ENCODE measurements at regions of chr13 and their contacts with region 1.

Region 1: DNA sequence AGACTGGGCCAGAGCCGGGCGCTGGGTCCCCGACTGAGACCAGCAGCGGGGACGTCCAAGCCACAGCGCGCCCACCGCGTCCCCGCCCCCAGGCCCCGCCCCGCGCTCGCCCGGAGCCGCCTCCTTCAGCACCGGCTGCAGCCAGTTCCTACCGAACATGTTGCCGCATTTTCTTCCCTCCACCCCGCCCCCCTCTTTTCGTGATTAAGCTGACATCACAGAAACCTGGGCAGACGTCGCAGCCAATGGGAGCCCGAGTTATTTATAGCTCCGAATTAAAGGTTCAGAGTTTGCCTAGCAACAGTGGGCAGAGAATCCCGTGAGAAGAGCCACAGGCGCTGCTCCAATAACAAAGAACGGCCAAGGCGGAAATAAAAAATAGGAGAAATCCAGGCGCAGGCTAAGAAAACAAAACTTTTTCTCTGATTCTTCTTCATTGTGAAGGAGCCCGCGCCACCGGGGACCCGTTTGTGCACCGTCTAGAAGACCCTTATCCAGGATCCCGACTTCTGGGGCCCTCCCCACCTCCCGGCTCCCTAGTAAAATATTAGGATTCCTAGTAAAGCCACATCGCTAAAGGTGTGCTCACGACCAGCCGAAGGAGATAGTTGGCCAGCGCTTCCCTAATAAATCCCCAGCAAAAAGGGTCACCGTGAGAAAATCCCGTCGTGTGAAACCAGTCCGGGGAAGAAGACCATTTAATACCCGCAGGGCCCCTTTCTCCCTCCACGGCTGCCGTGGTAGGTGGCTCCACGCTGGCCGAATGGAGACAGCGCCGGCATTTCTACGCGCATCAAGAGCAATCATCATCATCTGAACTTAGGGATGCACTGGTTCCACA is 61.7 kb downstream of the SERP2 start:
- DNase-seq: peak; percentile 99
- H3K4me3 ChIP-seq: peak overlapping the region; percentile 90
- CTCF ChIP-seq: no peak

Region 2: DNA sequence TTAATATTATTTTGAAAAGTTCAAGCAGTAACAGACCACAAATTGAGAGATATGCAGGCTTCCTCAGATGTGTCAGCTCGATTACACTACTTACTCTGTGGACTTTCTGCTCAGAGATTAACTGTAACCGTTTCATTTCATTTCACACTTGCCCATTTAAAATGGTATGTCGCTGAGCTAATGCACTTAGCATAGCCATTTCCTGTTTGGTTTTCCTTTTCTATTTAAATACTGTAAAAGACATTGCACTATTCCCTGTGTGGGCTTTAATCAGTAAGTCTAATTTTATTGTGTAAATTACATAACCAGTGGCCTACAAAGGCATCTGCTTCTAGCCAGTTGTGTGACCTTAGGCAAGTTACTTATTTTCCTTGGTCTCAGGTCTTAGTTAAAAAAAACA is 318.0 kb before region 1 on chr13:
- in situ Hi-C with region 1: no loop called
- DNase-seq: peak; percentile 41
- H3K4me3 ChIP-seq: no peak overlapping the region
- CTCF ChIP-seq: no peak

Region 3: GRCh38 chr13:44300895-44301638 is 134.3 kb before region 1 on chr13:
- in situ Hi-C with region 1: loop called (anchors 25 kb)
- DNase-seq: peak; percentile 89
- H3K4me3 ChIP-seq: no peak overlapping the region
- CTCF ChIP-seq: no peak